ENCODE measurements at regions of chr4 and their contacts with region 1.

Region 1: GRCh38 chr4:147590249-147590920 is 26.8 kb upstream of the TMEM184C start:
- DNase-seq: no peak
- H3K4me3 ChIP-seq: no peak overlapping the region
- H3K27ac ChIP-seq: no peak overlapping the region
- H3K4me1 ChIP-seq: peaks cover 0 to 4% (median 0%) of the 10 kb centered on the region in 3 donors
- H3K27me3 ChIP-seq: no peaks in the 10 kb centered on the region
- CTCF ChIP-seq: peak; percentile 22 to 75 (median 68)
- POLR2A ChIP-seq: no peak

Region 2: GRCh38 chr4:146398896-146399445 is 1191.4 kb before region 1 on chr4:
- intact Hi-C with region 1: no loop called
- DNase-seq: no peak
- H3K4me3 ChIP-seq: no peak overlapping the region
- H3K27ac ChIP-seq: no peak overlapping the region
- H3K4me1 ChIP-seq: no peaks in the 10 kb centered on the region
- H3K27me3 ChIP-seq: no peaks in the 10 kb centered on the region
- CTCF ChIP-seq: no peak
- POLR2A ChIP-seq: no peak

Region 3: GRCh38 chr4:147078875-147079658 is 511.3 kb before region 1 on chr4:
- intact Hi-C with region 1: no loop called
- DNase-seq: no peak
- H3K4me3 ChIP-seq: peak overlapping the region in 1 of 4 donors; percentile 33
- H3K27ac ChIP-seq: no peak overlapping the region
- H3K4me1 ChIP-seq: peaks cover 0 to 14% (median 0%) of the 10 kb centered on the region in 3 donors
- H3K27me3 ChIP-seq: no peaks in the 10 kb centered on the region
- CTCF ChIP-seq: no peak
- POLR2A ChIP-seq: no peak

Region 4: GRCh38 chr4:147160908-147161513 is 429.4 kb before region 1 on chr4:
- intact Hi-C with region 1: loop called (anchors 5 kb)
- DNase-seq: no peak
- H3K4me3 ChIP-seq: no peak overlapping the region
- H3K27ac ChIP-seq: no peak overlapping the region
- H3K4me1 ChIP-seq: peaks cover 0 to 12% (median 0%) of the 10 kb centered on the region in 3 donors
- H3K27me3 ChIP-seq: peaks cover 0 to 12% (median 0%) of the 10 kb centered on the region in 4 donors
- CTCF ChIP-seq: peak; percentile 30 to 78 (median 66)
- POLR2A ChIP-seq: no peak

Region 5: GRCh38 chr4:147741190-147741785 is 150.9 kb after region 1 on chr4:
- intact Hi-C with region 1: no loop called
- DNase-seq: no peak
- H3K4me3 ChIP-seq: no peak overlapping the region
- H3K27ac ChIP-seq: peak overlapping the region in 1 of 4 donors; percentile 36
- H3K4me1 ChIP-seq: peaks cover 8 to 73% (median 10%) of the 10 kb centered on the region in 3 donors
- H3K27me3 ChIP-seq: no peaks in the 10 kb centered on the region
- CTCF ChIP-seq: no peak
- POLR2A ChIP-seq: no peak